Activated naive CD4-positive, alpha-beta T cell treated with anti-CD3 and anti-CD28 coated beads for 36 hours (primary cell): ENCODE measurements at regions of chr10 and their contacts with region 1.

Region 1: GRCh38 chr10:95445837-95446486 is 115.2 kb downstream of the SORBS1 start:
- DNase-seq: peak; percentile 54
- H3K4me3 Mint-ChIP-seq: no peak overlapping the region
- H3K27ac Mint-ChIP-seq: no peak overlapping the region
- H3K4me1 Mint-ChIP-seq: no peaks in the 10 kb centered on the region
- H3K27me3 Mint-ChIP-seq: peaks cover 3% of the 10 kb centered on the region

Region 2: DNA sequence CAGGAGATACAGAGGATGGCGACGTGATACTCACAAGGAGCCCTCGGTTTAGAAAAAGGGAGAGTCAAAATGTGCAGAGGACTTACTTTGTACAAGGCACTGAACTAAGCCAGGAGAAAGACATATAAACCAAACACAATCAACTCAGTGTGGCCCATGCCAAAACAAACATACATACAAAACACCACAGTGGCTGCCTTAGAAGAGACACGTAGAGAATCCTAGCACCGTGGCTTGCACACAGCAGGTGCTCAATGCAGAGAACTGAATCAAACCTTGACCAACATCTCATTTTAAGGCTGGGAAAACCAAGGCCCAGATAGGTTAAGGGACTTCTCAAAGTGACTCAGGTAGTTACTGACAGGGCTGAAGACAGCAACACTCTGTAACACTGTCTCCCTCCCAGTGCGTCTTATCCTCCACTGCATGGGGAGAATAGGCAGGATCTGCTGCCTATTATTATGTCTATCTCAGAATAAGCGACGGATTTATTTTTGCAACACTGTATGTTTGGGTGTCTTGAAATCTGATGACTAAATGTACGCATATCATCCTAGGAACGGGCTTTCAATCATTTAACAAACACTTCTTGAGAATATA is 104.2 kb after region 1 on chr10:
- CTCF ChIA-PET with region 1: no interaction called
- intact Hi-C with region 1: no loop called
- DNase-seq: no peak
- H3K4me3 Mint-ChIP-seq: no peak overlapping the region
- H3K27ac Mint-ChIP-seq: no peak overlapping the region
- H3K4me1 Mint-ChIP-seq: no peaks in the 10 kb centered on the region
- H3K27me3 Mint-ChIP-seq: peaks cover 4% of the 10 kb centered on the region

Region 3: DNA sequence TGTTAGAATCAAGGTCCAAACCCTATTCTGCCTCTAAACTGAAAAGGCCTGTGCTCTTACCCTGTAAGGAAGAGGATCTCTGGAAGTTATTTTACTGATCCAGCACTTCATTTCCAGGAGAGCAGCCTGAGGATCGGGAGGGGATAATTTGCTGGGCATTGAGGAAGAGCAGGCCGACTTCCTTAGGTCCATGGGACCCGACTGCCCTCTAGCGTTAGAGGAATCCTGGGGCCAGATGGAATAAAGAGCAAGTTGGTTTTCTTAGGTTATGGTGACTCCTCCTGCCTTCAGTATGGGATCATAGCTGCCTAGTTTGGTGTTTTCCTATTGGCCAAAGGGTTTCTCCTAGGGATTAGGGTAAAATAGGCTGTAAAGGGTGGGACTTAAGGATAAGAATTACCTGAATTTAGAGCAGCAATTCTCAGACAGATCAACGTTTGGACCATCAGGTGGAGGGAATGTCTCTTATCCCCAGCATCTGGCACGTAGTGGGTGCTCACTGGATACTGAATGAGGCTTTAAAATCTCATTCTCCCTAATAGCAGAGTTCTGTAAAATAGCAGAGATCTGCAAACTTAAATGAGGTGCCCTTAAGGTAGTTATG is 155.3 kb after region 1 on chr10:
- CTCF ChIA-PET with region 1: interaction called, 3 read pairs
- intact Hi-C with region 1: loop called (anchors 5 kb)
- DNase-seq: peak; percentile 68
- H3K4me3 Mint-ChIP-seq: no peak overlapping the region
- H3K27ac Mint-ChIP-seq: no peak overlapping the region
- H3K4me1 Mint-ChIP-seq: no peaks in the 10 kb centered on the region
- H3K27me3 Mint-ChIP-seq: no peaks in the 10 kb centered on the region

Region 4: GRCh38 chr10:96168546-96168945 is 722.6 kb after region 1 on chr10:
- CTCF ChIA-PET with region 1: no interaction called
- intact Hi-C with region 1: no loop called
- DNase-seq: no peak
- H3K4me3 Mint-ChIP-seq: no peak overlapping the region
- H3K27ac Mint-ChIP-seq: no peak overlapping the region
- H3K4me1 Mint-ChIP-seq: no peaks in the 10 kb centered on the region
- H3K27me3 Mint-ChIP-seq: peaks cover 2% of the 10 kb centered on the region